Naive thymus-derived CD4-positive, alpha-beta T cell (primary cell): ENCODE measurements at regions of chr5 and their contacts with region 1.

Region 1: GRCh38 chr5:81751009-81751835 is at the start of gene SSBP2:
- DNase-seq: peak; percentile 99 to 100 (median 99)
- ATAC-seq: peak; percentile 93
- H3K4me3 ChIP-seq: peak within 1 kb of the TSS; percentile 61
- H3K4me3 Mint-ChIP-seq: peak within 1 kb of the TSS; percentile 92 to 100 (median 96)
- H3K27ac ChIP-seq: peak within 1 kb of the TSS; percentile 87
- H3K27ac Mint-ChIP-seq: peak within 1 kb of the TSS; percentile 81 to 96 (median 94)
- H3K4me1 ChIP-seq: peaks cover 6 to 13% of the 10 kb centered on the region in 2 donors
- H3K4me1 Mint-ChIP-seq: peaks cover 21 to 49% (median 38%) of the 10 kb centered on the region in 7 donors
- H3K27me3 ChIP-seq: no peaks in the 10 kb centered on the region
- H3K27me3 Mint-ChIP-seq: peaks cover 0 to 49% (median 0%) of the 10 kb centered on the region in 5 donors
- total RNA-seq, gene SSBP2: 36.7 to 73.1 (median 55.9) TPM

Region 2: GRCh38 chr5:80654391-80655230 is 1096.6 kb before region 1 on chr5 and contains the starts of genes DHFR and MSH3:
- CTCF ChIA-PET with region 1: no interaction called
- POLR2A ChIA-PET with region 1: no interaction called
- intact Hi-C with region 1: loop called in 1 of 2 experiments (anchors 1 kb)
- DNase-seq: peak; percentile 73 to 91 (median 87)
- ATAC-seq: peak; percentile 86
- H3K4me3 ChIP-seq: peak within 1 kb of the TSS; percentile 91
- H3K4me3 Mint-ChIP-seq: peak within 1 kb of the TSS; percentile 82 to 98 (median 90)
- H3K27ac ChIP-seq: peak within 1 kb of the TSS; percentile 82
- H3K27ac Mint-ChIP-seq: peak within 1 kb of the TSS; percentile 89 to 97 (median 96)
- H3K4me1 ChIP-seq: peaks cover 24 to 28% of the 10 kb centered on the region in 2 donors
- H3K4me1 Mint-ChIP-seq: peaks cover 10 to 40% (median 32%) of the 10 kb centered on the region in 7 donors
- H3K27me3 ChIP-seq: no peaks in the 10 kb centered on the region
- H3K27me3 Mint-ChIP-seq: no peaks in the 10 kb centered on the region
- total RNA-seq, gene DHFR: 6.9 to 68.9 (median 17.0) TPM
- total RNA-seq, gene MSH3: 12.0 to 20.9 (median 16.7) TPM

Region 3: GRCh38 chr5:81506900-81507588 is 244.2 kb before region 1 on chr5:
- CTCF ChIA-PET with region 1: no interaction called
- POLR2A ChIA-PET with region 1: interaction called, 3 read pairs
- intact Hi-C with region 1: loop called (anchors 1 kb)
- DNase-seq: peak in 7 of 9 donors; percentile 34 to 66 (median 55)
- ATAC-seq: peak; percentile 96
- H3K4me3 ChIP-seq: no peak overlapping the region
- H3K4me3 Mint-ChIP-seq: no peak overlapping the region
- H3K27ac ChIP-seq: no peak overlapping the region
- H3K27ac Mint-ChIP-seq: no peak overlapping the region
- H3K4me1 ChIP-seq: no peaks in the 10 kb centered on the region
- H3K4me1 Mint-ChIP-seq: peaks cover 0 to 27% (median 8%) of the 10 kb centered on the region in 7 donors
- H3K27me3 ChIP-seq: no peaks in the 10 kb centered on the region
- H3K27me3 Mint-ChIP-seq: no peaks in the 10 kb centered on the region

Region 4: GRCh38 chr5:81552852-81553566 is 198.2 kb before region 1 on chr5:
- CTCF ChIA-PET with region 1: no interaction called
- POLR2A ChIA-PET with region 1: no interaction called
- intact Hi-C with region 1: no loop called
- DNase-seq: no peak
- ATAC-seq: no peak
- H3K4me3 ChIP-seq: no peak overlapping the region
- H3K4me3 Mint-ChIP-seq: no peak overlapping the region
- H3K27ac ChIP-seq: no peak overlapping the region
- H3K27ac Mint-ChIP-seq: peak overlapping the region in 2 of 9 donors; percentile 33 to 48
- H3K4me1 ChIP-seq: peaks cover 0 to 3% of the 10 kb centered on the region in 2 donors
- H3K4me1 Mint-ChIP-seq: peaks cover 4 to 42% (median 30%) of the 10 kb centered on the region in 7 donors
- H3K27me3 ChIP-seq: no peaks in the 10 kb centered on the region
- H3K27me3 Mint-ChIP-seq: no peaks in the 10 kb centered on the region

Region 5: GRCh38 chr5:81718300-81718699 is 32.9 kb before region 1 on chr5:
- CTCF ChIA-PET with region 1: no interaction called
- POLR2A ChIA-PET with region 1: interaction called, 3 read pairs
- intact Hi-C with region 1: loop called in 1 of 2 experiments (anchors 2 kb)
- DNase-seq: peak in 1 of 9 donors; percentile 8
- ATAC-seq: peak; percentile 39
- H3K4me3 ChIP-seq: no peak overlapping the region
- H3K4me3 Mint-ChIP-seq: peak overlapping the region in 9 of 10 donors; percentile 1 to 72 (median 57)
- H3K27ac ChIP-seq: no peak overlapping the region
- H3K27ac Mint-ChIP-seq: peak overlapping the region in 5 of 9 donors; percentile 9 to 83 (median 60)
- H3K4me1 ChIP-seq: peaks cover 0 to 39% of the 10 kb centered on the region in 2 donors
- H3K4me1 Mint-ChIP-seq: peaks cover 27 to 96% (median 84%) of the 10 kb centered on the region in 7 donors
- H3K27me3 ChIP-seq: no peaks in the 10 kb centered on the region
- H3K27me3 Mint-ChIP-seq: no peaks in the 10 kb centered on the region

Region 6: GRCh38 chr5:81838307-81838906 is 87.2 kb after region 1 on chr5:
- CTCF ChIA-PET with region 1: interaction called, 9 read pairs
- POLR2A ChIA-PET with region 1: interaction called, 16 read pairs
- intact Hi-C with region 1: loop called in 1 of 2 experiments (anchors 1 kb)
- DNase-seq: peak in 6 of 9 donors; percentile 24 to 50 (median 41)
- ATAC-seq: peak; percentile 87
- H3K4me3 ChIP-seq: no peak overlapping the region
- H3K4me3 Mint-ChIP-seq: no peak overlapping the region
- H3K27ac ChIP-seq: no peak overlapping the region
- H3K27ac Mint-ChIP-seq: peak overlapping the region in 4 of 9 donors; percentile 1 to 51 (median 6)
- H3K4me1 ChIP-seq: peaks cover 0 to 8% of the 10 kb centered on the region in 2 donors
- H3K4me1 Mint-ChIP-seq: peaks cover 4 to 12% (median 8%) of the 10 kb centered on the region in 7 donors
- H3K27me3 ChIP-seq: no peaks in the 10 kb centered on the region
- H3K27me3 Mint-ChIP-seq: peaks cover 0 to 3% (median 0%) of the 10 kb centered on the region in 5 donors

Region 7: DNA sequence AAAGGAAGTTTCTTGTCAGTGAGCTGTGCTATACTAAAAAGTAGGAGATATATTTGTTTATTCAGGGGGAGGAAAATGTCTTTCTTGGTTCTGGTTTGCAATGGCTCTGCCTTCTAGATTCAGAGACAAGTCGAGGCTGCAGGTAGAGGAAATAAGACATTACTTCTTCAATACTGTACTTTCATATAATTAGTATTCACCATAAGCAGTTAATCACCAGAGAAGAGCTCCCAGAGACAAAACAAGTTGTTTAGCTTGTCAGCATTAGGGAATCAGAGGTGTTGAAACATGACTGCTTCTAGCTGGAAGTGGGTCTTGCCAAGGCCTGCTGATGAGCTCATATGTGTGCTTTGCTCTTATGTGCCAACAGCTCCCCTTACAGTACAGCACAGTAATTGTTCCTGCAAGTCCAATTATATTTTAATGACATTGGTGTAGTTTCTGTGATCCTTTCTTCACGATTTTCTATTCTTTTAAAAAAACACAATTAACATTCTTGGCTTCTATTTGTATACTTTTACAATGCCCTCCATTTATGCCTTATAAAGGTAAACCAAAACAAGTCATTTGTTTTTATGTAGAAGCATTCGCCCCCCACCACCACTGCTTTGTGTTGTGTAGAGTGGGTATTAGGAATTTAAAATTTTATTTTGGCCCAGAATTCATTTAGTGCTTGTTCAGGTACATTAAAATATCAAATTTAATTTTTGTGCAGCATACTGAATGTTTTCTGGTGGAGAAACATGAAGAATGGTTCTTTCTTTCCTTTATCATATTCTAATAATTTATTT is 414.7 kb after region 1 on chr5:
- CTCF ChIA-PET with region 1: no interaction called
- POLR2A ChIA-PET with region 1: no interaction called
- intact Hi-C with region 1: loop called (anchors 1 to 5 kb)
- DNase-seq: peak in 7 of 9 donors; percentile 39 to 70 (median 58)
- ATAC-seq: peak; percentile 96
- H3K4me3 ChIP-seq: no peak overlapping the region
- H3K4me3 Mint-ChIP-seq: no peak overlapping the region
- H3K27ac ChIP-seq: no peak overlapping the region
- H3K27ac Mint-ChIP-seq: peak overlapping the region in 6 of 9 donors; percentile 3 to 65 (median 17)
- H3K4me1 ChIP-seq: no peaks in the 10 kb centered on the region
- H3K4me1 Mint-ChIP-seq: peaks cover 0 to 12% (median 7%) of the 10 kb centered on the region in 7 donors
- H3K27me3 ChIP-seq: no peaks in the 10 kb centered on the region
- H3K27me3 Mint-ChIP-seq: no peaks in the 10 kb centered on the region